ENCODE measurements at regions of chr12 and their contacts with region 1.

Region 1: GRCh38 chr12:53508534-53509199 is 1.4 kb upstream of the NPFF start:
- DNase-seq: peak; percentile 77 to 85
- ATAC-seq: peak; percentile 85 to 93
- H3K4me3 ChIP-seq: no peak overlapping the region
- H3K27ac ChIP-seq: peak overlapping the region in 1 of 2 experiments; percentile 42; a peak in 1 of 6 replicates
- H3K4me1 ChIP-seq: peaks cover 9% of the 10 kb centered on the region
- CTCF ChIP-seq: peak; percentile 91
- EP300 ChIP-seq: no peak
- POLR2A ChIP-seq: no peak
- RAD21 ChIP-seq: peak; percentile 91 to 98

Region 2: GRCh38 chr12:53492830-53493611 is 15.6 kb before region 1 on chr12:
- CTCF ChIA-PET with region 1: interaction called, 53 read pairs
- POLR2A ChIA-PET with region 1: no interaction called
- DNase-seq: peak; percentile 72 to 92
- ATAC-seq: peak; percentile 80 to 84
- H3K4me3 ChIP-seq: peak overlapping the region; percentile 60
- H3K27ac ChIP-seq: peak overlapping the region; percentile 89 to 91
- H3K4me1 ChIP-seq: peaks cover 48% of the 10 kb centered on the region
- CTCF ChIP-seq: no peak
- EP300 ChIP-seq: no peak
- POLR2A ChIP-seq: peak; percentile 85
- RAD21 ChIP-seq: no peak; a peak in 1 of 5 replicates

Region 3: DNA sequence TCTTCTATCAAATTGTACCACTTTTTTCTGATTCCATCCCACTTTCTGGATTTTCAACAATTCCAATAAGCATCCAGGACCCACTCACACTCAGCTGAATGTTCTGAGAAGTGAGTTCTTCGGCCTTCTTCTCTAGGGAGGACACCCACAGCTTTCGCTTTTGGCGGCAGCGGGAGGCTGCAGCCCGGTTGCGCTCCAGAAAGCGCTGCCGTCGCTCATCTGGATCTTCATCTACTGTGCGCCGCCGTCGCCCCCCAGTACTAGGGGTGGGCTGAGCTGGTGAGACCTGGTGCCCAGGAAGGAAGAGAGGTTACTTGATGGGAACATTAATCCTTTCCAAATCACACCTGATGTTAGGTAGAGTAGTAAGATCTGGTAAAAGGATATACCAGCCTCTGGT is 15.8 kb after region 1 on chr12:
- CTCF ChIA-PET with region 1: interaction called, 104 read pairs
- POLR2A ChIA-PET with region 1: no interaction called
- DNase-seq: no peak
- ATAC-seq: no peak
- H3K4me3 ChIP-seq: no peak overlapping the region
- H3K27ac ChIP-seq: no peak overlapping the region
- H3K4me1 ChIP-seq: no peaks in the 10 kb centered on the region
- CTCF ChIP-seq: no peak
- EP300 ChIP-seq: no peak
- POLR2A ChIP-seq: no peak
- RAD21 ChIP-seq: no peak

Region 4: GRCh38 chr12:54240971-54241588 is 732.4 kb after region 1 on chr12:
- CTCF ChIA-PET with region 1: no interaction called
- POLR2A ChIA-PET with region 1: no interaction called
- DNase-seq: no peak
- ATAC-seq: no peak
- H3K4me3 ChIP-seq: no peak overlapping the region
- H3K27ac ChIP-seq: no peak overlapping the region
- H3K4me1 ChIP-seq: no peaks in the 10 kb centered on the region
- CTCF ChIP-seq: no peak
- EP300 ChIP-seq: no peak
- POLR2A ChIP-seq: no peak
- RAD21 ChIP-seq: no peak

Measured in A549 (cell line).